Right lobe of liver (tissue), 6 donors: ENCODE measurements at regions of chr13 and their contacts with region 1.

Region 1: DNA sequence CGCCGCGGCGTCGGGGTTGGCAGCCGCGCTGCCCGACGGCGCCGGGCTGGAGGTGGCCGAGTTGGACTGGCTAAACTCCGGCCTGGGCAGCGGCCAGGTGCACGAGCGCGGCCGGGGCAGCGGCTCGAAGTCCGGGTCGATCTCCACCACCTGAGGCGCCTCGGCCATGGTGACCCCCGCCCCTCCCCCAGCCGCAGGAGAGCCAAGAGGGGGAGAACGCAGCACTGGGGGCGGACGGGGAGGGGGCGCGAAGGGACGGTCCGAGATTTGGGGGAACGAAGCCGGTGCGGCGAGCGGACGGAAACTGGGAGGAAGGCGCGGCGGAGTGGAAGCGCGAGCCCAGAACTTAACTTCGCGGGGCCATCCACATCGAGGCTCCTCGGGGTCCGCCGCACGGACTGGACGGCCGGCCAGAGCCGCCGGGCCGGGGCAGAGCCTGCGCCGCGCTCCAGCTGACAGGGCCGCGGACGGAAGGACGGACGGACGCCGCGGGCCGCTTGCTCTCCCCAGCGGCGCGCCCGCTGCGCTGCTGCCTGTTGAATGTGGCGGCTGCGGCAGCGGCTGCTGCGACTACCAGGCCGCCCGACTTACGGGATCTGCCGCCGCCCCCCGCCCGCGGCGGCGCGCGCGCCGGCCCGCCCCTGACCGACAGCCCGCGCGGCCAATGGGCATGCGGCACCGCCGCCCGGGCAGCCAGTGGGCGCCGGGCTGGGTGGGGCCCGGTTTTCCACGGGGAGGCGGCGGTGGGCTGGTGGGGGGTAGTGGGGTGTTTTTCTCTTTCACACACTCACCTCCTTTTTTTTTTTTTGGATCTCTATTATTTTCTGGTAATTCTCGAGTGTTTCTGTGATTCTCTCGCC is at the start of gene FOXO1:
- DNase-seq: peak; percentile 92 to 94 (median 93)
- ATAC-seq: peak; percentile 69 to 86 (median 76)
- H3K4me3 ChIP-seq: peak within 1 kb of the TSS; percentile 85 to 96 (median 92)
- H3K27ac ChIP-seq: peak within 1 kb of the TSS; percentile 97 to 99 (median 99)
- H3K4me1 ChIP-seq: peaks cover 0 to 30% (median 4%) of the 10 kb centered on the region in 4 donors
- H3K27me3 ChIP-seq: no peaks in the 10 kb centered on the region
- CTCF ChIP-seq: no peak
- POLR2A ChIP-seq: peak; percentile 99
- total RNA-seq, gene FOXO1: 12.3 to 27.7 (median 14.6) TPM

Region 2: GRCh38 chr13:40485611-40486517 is 180.4 kb before region 1 on chr13:
- intact Hi-C with region 1: loop called in 1 of 2 experiments (anchors 10 kb)
- DNase-seq: no peak
- ATAC-seq: peak; percentile 20 to 47 (median 32)
- H3K4me3 ChIP-seq: no peak overlapping the region
- H3K27ac ChIP-seq: no peak overlapping the region
- H3K4me1 ChIP-seq: no peaks in the 10 kb centered on the region
- H3K27me3 ChIP-seq: no peaks in the 10 kb centered on the region
- CTCF ChIP-seq: no peak
- POLR2A ChIP-seq: no peak

Region 3: GRCh38 chr13:40549500-40550094 is 116.7 kb before region 1 on chr13:
- intact Hi-C with region 1: loop called in 1 of 2 experiments (anchors 10 kb)
- DNase-seq: no peak
- ATAC-seq: peak; percentile 9 to 69 (median 17)
- H3K4me3 ChIP-seq: no peak overlapping the region
- H3K27ac ChIP-seq: no peak overlapping the region
- H3K4me1 ChIP-seq: peaks cover 0 to 7% (median 2%) of the 10 kb centered on the region in 4 donors
- H3K27me3 ChIP-seq: no peaks in the 10 kb centered on the region
- CTCF ChIP-seq: no peak
- POLR2A ChIP-seq: no peak

Region 4: DNA sequence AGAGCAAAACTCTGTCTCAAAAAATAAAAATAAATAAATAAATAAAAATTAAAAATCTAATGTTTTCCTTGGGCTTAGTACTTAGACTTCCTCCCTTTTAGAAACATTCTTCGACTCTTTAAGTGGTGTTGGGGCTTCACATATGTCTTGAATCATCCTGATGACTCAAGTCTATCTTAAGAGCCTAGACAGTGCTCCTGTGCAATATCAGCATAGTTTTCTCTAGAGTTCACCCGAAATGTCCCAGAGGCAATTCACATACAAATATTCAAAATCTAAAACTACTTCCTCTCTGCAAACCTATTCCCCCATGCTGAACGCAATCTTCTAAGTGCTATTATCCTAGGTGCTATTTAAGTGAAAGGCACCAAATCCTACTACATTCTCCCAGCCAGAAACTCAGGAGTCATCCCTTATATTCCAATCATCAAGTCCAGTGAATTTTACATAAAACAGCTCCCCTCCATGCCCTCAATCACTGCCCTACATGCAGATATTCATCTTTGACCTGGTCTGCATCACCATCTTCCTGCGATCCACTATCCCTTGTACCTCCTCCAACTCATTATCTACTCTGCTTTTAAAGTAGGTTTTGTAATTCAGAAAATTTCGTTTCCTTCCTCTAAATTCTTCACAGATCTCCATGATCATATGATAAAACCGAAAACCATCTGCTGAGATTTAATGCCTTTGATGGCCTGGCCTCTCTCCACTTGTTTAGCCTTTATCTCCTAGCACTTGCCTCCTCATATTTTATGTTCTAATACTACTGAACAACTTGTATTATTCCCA is 250.1 kb after region 1 on chr13:
- intact Hi-C with region 1: no loop called
- DNase-seq: no peak
- ATAC-seq: no peak
- H3K4me3 ChIP-seq: no peak overlapping the region
- H3K27ac ChIP-seq: no peak overlapping the region
- H3K4me1 ChIP-seq: peaks cover 0 to 19% (median 0%) of the 10 kb centered on the region in 4 donors
- H3K27me3 ChIP-seq: no peaks in the 10 kb centered on the region
- CTCF ChIP-seq: no peak
- POLR2A ChIP-seq: no peak